Activated CD4-positive, alpha-beta memory T cell treated with anti-CD3 and anti-CD28 coated beads for 36 hours (primary cell): ENCODE measurements at regions of chr11 and their contacts with region 1.

Region 1: GRCh38 chr11:3971756-3972404 is 116.4 kb downstream of the STIM1 start:
- DNase-seq: no peak
- H3K4me3 Mint-ChIP-seq: no peak overlapping the region
- H3K27ac Mint-ChIP-seq: peak overlapping the region; percentile 44
- H3K4me1 Mint-ChIP-seq: peaks cover 61% of the 10 kb centered on the region
- H3K27me3 Mint-ChIP-seq: no peaks in the 10 kb centered on the region

Region 2: GRCh38 chr11:3920148-3920852 is 51.6 kb before region 1 on chr11:
- CTCF ChIA-PET with region 1: no interaction called
- POLR2A ChIA-PET with region 1: no interaction called
- intact Hi-C with region 1: loop called (anchors 1 kb)
- DNase-seq: peak; percentile 87
- H3K4me3 Mint-ChIP-seq: no peak overlapping the region
- H3K27ac Mint-ChIP-seq: peak overlapping the region; percentile 77
- H3K4me1 Mint-ChIP-seq: peaks cover 61% of the 10 kb centered on the region
- H3K27me3 Mint-ChIP-seq: no peaks in the 10 kb centered on the region

Region 3: DNA sequence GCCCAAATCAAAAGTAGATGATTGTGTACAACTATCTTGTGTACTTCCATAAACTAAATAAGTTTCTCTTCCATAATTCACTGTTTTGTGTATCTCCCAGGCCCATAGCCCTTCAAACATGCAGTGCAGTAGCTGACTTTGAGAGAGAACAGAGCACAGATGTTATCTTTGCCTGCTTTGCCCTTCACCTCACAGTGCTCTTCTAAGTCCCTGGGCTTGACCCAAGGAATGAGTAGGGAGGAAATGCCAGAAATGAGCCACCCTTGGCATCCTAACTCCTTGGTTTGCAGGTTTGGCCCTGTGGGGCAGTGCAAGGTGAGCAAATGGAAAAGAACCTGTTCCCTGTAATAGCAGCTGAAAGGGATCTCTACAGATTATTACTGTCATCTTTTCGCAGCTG is 37.2 kb before region 1 on chr11:
- CTCF ChIA-PET with region 1: no interaction called
- POLR2A ChIA-PET with region 1: no interaction called
- intact Hi-C with region 1: no loop called
- DNase-seq: no peak
- H3K4me3 Mint-ChIP-seq: no peak overlapping the region
- H3K27ac Mint-ChIP-seq: no peak overlapping the region
- H3K4me1 Mint-ChIP-seq: peaks cover 55% of the 10 kb centered on the region
- H3K27me3 Mint-ChIP-seq: no peaks in the 10 kb centered on the region

Region 4: DNA sequence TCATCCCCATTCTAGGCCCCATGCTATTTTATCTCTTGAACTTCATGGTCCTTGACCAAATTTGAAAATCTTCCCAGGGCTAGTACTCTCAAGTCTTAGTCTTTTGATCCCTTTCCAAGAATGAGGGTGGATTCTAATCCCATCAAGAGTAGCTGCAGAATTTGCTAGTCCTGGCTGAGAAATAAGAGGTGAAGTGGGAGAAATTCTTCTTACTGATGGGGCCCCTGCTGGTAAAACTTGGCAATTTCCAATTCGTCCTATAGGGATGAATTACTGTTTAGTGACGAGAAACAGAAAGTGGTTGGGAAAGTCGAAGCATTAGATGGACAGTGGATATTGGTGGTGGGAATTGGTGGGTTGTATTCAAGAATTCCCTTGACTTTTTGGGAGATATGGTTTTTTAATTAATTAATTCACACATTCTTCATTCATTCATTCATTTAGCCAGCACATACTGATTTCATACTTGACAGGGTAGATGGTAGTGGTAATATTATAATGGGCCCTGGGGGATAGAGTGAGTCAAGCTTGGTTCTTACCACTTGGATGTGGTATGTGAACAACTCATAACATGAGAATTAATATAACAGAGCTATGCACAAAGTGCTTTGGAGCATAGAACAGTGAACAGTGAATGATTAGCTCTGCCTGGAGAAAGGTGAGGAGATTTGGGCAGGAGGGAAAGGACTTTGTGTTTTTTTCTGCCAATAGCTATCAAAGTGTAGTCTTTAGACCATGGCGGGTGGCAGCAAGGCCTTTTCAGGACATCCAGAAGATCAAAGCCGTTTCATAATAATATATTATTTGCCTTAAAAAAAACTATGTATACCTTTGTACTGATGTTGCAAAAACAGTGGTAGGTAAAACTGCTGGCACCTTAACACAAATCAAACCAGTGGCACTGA is 12.6 kb before region 1 on chr11:
- CTCF ChIA-PET with region 1: interaction called, 4 read pairs
- POLR2A ChIA-PET with region 1: interaction called, 7 read pairs
- intact Hi-C with region 1: loop called (anchors 1 kb)
- DNase-seq: no peak
- H3K4me3 Mint-ChIP-seq: no peak overlapping the region
- H3K27ac Mint-ChIP-seq: peak overlapping the region; percentile 11
- H3K4me1 Mint-ChIP-seq: peaks cover 76% of the 10 kb centered on the region
- H3K27me3 Mint-ChIP-seq: no peaks in the 10 kb centered on the region

Region 5: DNA sequence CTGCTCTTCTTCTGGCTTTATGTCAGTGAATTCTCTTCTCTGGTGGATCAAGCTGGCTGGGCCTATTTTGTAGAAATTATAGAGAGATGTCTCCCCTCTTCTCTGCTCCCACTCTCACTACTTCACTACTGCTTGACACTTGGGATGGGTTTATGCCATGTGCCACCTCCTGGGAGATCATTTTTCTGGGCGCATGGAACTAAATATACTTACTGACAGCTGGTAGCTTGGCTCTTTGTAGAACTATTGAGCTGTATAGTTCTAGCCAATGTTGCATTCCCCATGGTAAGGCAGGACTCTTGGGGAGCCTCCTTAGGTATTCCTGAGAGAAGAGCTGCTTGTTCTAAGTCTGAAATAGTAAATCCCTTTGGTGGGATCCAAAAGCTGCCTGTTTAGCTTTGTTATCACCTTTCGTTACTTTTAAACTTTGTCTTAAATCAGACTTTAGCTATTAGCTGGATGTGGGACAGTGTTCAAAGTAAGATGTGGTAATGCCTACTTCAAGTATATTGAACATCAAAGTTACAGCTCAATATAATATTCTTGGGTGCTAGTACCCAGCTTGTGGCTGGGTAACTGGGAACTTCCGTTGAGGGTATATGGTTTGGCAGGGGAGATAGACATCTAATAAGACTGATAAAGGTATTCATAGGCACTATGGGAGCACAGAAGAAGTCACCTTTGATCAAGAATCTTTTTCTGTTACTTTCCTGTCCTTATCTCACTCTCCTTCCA is 35.2 kb after region 1 on chr11:
- CTCF ChIA-PET with region 1: no interaction called
- POLR2A ChIA-PET with region 1: no interaction called
- intact Hi-C with region 1: no loop called
- DNase-seq: no peak
- H3K4me3 Mint-ChIP-seq: no peak overlapping the region
- H3K27ac Mint-ChIP-seq: no peak overlapping the region
- H3K4me1 Mint-ChIP-seq: peaks cover 24% of the 10 kb centered on the region
- H3K27me3 Mint-ChIP-seq: no peaks in the 10 kb centered on the region

Region 6: GRCh38 chr11:4032122-4032521 is 60.2 kb after region 1 on chr11:
- CTCF ChIA-PET with region 1: no interaction called
- POLR2A ChIA-PET with region 1: no interaction called
- intact Hi-C with region 1: no loop called
- DNase-seq: no peak
- H3K4me3 Mint-ChIP-seq: no peak overlapping the region
- H3K27ac Mint-ChIP-seq: no peak overlapping the region
- H3K4me1 Mint-ChIP-seq: peaks cover 16% of the 10 kb centered on the region
- H3K27me3 Mint-ChIP-seq: no peaks in the 10 kb centered on the region